ENCODE measurements at regions of chr12 and their contacts with region 1.

Region 1: DNA sequence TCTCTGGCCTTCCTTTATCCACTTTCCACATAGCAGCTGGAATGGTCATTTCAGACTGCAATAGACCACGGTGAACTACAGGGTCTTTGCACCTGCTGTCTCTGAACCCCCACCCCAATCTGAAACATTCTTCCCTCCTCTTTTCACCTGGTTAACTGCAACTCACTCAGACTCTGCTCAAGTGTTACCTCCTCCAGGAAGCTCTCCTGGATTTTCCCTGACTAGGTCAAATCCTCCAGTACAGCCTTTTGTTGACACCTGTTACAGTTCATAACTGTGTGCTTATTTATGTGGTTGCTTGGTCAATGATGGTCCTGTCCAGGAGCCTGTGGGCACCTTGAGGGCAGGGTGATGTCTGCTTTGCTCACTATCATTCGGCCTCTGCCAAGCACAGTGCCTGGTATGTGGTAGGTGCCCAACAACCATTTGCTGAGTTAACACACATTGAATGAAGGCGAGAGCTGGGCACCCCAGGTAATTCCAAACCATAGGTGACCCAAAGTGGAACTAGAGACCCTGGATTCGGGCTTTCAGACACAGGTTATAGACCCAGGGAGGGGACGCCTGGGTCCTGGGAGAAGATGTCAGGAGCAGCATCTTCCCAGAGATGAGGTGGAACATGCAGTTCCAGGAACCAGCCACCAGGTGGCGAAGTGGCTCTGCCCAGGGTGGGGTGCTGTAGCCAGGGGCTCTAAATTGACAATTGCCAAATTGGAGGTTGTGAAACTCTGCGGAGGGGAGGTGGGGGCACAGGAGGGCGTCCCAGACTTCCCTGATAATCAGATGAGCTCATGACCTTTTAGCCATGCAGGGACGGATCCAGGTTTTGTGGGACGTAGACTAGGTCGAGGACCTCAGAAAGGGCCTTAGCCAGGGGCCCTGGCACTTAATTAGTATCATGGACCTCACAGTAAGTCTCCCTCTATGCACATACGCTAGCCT is 28.1 kb downstream of the TRPV4 start:
- DNase-seq: peak; percentile 53
- H3K4me3 ChIP-seq: no peak overlapping the region
- H3K27ac ChIP-seq: no peak overlapping the region
- H3K4me1 ChIP-seq: no peaks in the 10 kb centered on the region
- H3K27me3 ChIP-seq: no peaks in the 10 kb centered on the region
- CTCF ChIP-seq: peak; percentile 90 to 96
- POLR2A ChIP-seq: no peak

Region 2: DNA sequence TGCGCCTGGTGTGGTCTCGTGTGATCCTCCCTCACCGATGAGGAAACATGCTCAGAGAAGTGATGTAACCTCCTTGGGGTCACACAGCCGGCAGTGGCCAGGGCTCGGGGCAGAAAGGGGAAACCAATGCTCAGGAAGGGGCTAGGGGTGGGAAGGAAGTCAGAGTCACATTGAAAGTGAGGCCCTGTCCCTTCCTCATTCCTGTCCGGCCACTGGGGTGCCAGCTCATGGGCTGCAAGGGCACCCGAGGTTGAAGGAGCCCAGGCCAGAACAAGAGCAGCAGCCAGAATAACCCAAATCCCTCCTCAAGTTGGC is 23.1 kb after region 1 on chr12:
- CTCF ChIA-PET with region 1: interaction called, 12 read pairs
- POLR2A ChIA-PET with region 1: interaction called, 15 read pairs
- dilution Hi-C with region 1: no loop called
- intact Hi-C with region 1: no loop called
- DNase-seq: peak; percentile 44
- H3K4me3 ChIP-seq: no peak overlapping the region
- H3K27ac ChIP-seq: peak overlapping the region; percentile 32
- H3K4me1 ChIP-seq: peaks cover 11% of the 10 kb centered on the region
- H3K27me3 ChIP-seq: no peaks in the 10 kb centered on the region
- CTCF ChIP-seq: no peak
- POLR2A ChIP-seq: no peak

Region 3: GRCh38 chr12:109833307-109834189 is 28.5 kb after region 1 on chr12 and contains the start of gene TRPV4:
- CTCF ChIA-PET with region 1: interaction called, 12 read pairs
- POLR2A ChIA-PET with region 1: interaction called, 15 read pairs
- dilution Hi-C with region 1: no loop called
- intact Hi-C with region 1: no loop called
- DNase-seq: peak; percentile 64
- H3K4me3 ChIP-seq: peak within 1 kb of the TSS; percentile 50 to 63 (median 58)
- H3K27ac ChIP-seq: peak within 1 kb of the TSS; percentile 27
- H3K4me1 ChIP-seq: peaks cover 24% of the 10 kb centered on the region
- H3K27me3 ChIP-seq: no peaks in the 10 kb centered on the region
- CTCF ChIP-seq: no peak
- POLR2A ChIP-seq: peak; percentile 70
- total RNA-seq, gene TRPV4: 8.8 and 12.3 TPM in 2 replicates

Region 4: GRCh38 chr12:109880016-109880931 is 75.2 kb after region 1 on chr12 and contains the start of gene GLTP:
- CTCF ChIA-PET with region 1: interaction called, 3 read pairs
- POLR2A ChIA-PET with region 1: no interaction called
- dilution Hi-C with region 1: no loop called
- intact Hi-C with region 1: loop called (anchors 1 kb)
- DNase-seq: peak; percentile 80
- H3K4me3 ChIP-seq: peak within 1 kb of the TSS; percentile 50 to 79 (median 76)
- H3K27ac ChIP-seq: peak within 1 kb of the TSS; percentile 40
- H3K4me1 ChIP-seq: peaks cover 17% of the 10 kb centered on the region
- H3K27me3 ChIP-seq: no peaks in the 10 kb centered on the region
- CTCF ChIP-seq: peak; percentile 38 to 68
- POLR2A ChIP-seq: peak; percentile 77
- total RNA-seq, gene GLTP: 46.6 and 48.0 TPM in 2 replicates